A549 (cell line): ENCODE measurements at regions of chr12 and their contacts with region 1.

Region 1: DNA sequence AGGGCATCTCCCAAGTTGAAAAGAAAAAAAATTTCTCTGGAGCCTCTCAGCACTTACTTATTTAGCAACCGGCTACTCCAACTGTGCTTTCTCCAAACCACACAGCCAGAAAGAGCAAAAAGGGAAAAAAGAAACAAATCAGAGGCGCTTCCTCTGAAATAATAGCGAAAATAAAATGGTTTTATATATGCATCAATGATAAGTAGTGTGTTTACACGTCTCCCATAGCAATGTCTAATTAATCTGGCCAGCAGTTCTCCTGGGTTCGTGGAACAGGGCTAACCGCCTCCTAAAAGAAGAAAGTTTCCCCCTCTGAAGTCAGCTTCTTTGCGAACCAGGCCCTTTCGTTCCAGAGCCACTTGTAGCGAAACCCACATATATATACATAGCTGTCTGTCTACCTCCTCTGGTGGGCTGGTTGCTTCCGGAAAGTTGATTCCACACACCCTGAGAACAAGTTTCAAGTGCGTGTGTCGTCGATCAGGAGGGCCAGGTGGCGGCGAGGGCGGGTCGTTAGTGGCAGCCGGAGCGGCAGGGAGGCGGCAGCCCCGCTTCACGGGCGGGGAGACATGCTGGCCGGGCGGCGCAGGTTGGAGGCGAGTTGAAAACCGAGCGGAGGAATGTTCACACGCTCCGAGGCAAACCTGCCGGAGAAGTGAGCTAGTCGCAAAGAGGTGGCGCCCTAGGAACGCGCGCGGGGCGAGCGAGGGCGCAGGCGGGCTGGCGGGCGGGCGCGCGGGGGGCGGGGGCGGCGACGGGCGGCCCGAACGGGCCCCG is 2.7 kb downstream of the PTHLH start:
- DNase-seq: peak; percentile 47 to 90
- ATAC-seq: peak; percentile 79 to 80
- H3K4me3 ChIP-seq: peak overlapping the region; percentile 64
- H3K27ac ChIP-seq: peak overlapping the region; percentile 82 to 95
- H3K4me1 ChIP-seq: peaks cover 83% of the 10 kb centered on the region
- CTCF ChIP-seq: peak; percentile 65
- EP300 ChIP-seq: no peak
- POLR2A ChIP-seq: peak; percentile 41
- RAD21 ChIP-seq: peak; percentile 73 to 75

Region 2: GRCh38 chr12:27779920-27780611 is 189.7 kb before region 1 on chr12 and contains the starts of genes KLHL42 and MANSC4:
- CTCF ChIA-PET with region 1: no interaction called
- POLR2A ChIA-PET with region 1: interaction called, 10 read pairs
- DNase-seq: peak; percentile 43 to 75
- ATAC-seq: peak; percentile 87 to 90
- H3K4me3 ChIP-seq: peak within 1 kb of the TSS; percentile 66
- H3K27ac ChIP-seq: peak within 1 kb of the TSS; percentile 92 to 97
- H3K4me1 ChIP-seq: peaks cover 25% of the 10 kb centered on the region
- CTCF ChIP-seq: 0 out of 3 replicates have a peak, but pooled peaks have one; percentile 7
- EP300 ChIP-seq: no peak
- POLR2A ChIP-seq: peak; percentile 55
- RAD21 ChIP-seq: no peak
- polyA plus RNA-seq, gene KLHL42: 24.0 and 29.1 TPM in 2 replicates
- polyA plus RNA-seq, gene MANSC4: 0.09 and 0.21 TPM in 2 replicates

Region 3: DNA sequence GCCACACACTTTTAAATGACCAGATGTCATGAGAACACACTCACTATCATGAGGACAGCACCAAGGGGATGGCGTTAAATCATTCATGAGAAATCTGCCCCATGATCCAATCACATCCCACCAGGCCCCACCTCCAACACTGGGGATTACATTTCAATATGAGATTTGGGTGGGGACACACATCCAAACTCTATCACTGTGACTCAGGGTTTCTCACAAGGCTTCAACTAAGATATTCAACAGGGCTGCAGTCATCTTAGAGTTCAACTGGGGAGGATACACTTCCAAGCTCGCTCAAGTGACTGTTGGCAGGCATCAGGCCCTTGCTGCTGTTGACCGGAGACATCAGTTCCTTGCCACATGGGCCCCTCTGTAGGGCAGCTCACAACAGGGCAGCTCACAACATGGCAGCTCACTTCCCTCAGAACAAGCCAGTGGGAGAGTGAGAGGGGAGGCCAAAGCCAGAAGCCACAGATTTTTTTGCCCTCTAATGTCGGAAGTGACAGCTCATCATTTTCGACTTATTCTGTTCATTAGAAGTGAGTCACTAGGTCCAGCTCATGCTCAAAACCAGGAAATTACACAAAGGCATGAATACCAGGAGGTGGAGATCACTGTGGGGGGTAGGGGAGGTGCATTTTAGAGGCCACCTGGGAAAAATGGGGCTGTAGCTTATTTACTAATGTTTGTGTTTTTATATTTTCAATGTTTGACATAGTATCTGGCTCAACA is 53.5 kb after region 1 on chr12:
- CTCF ChIA-PET with region 1: interaction called, 13 read pairs
- POLR2A ChIA-PET with region 1: interaction called, 6 read pairs
- DNase-seq: peak in 1 of 2 experiments; percentile 87
- ATAC-seq: peak; percentile 76 to 87
- H3K4me3 ChIP-seq: no peak overlapping the region
- H3K27ac ChIP-seq: peak overlapping the region; percentile 80 to 90
- H3K4me1 ChIP-seq: peaks cover 64% of the 10 kb centered on the region
- CTCF ChIP-seq: no peak
- EP300 ChIP-seq: peak; percentile 68 to 74; a peak in 2 of 5 replicates
- POLR2A ChIP-seq: no peak
- RAD21 ChIP-seq: peak; percentile 22 to 41; a peak in 3 of 5 replicates

Region 4: GRCh38 chr12:28164644-28165275 is 194.9 kb after region 1 on chr12:
- CTCF ChIA-PET with region 1: interaction called, 15 read pairs
- POLR2A ChIA-PET with region 1: interaction called, 4 read pairs
- DNase-seq: peak in 1 of 2 experiments; percentile 62
- ATAC-seq: peak; percentile 62 to 86; a peak in 5 of 6 replicates
- H3K4me3 ChIP-seq: no peak overlapping the region
- H3K27ac ChIP-seq: peak overlapping the region; percentile 49 to 53; a peak in 5 of 6 replicates
- H3K4me1 ChIP-seq: peaks cover 14% of the 10 kb centered on the region
- CTCF ChIP-seq: no peak
- EP300 ChIP-seq: no peak
- POLR2A ChIP-seq: no peak
- RAD21 ChIP-seq: no peak

Region 5: DNA sequence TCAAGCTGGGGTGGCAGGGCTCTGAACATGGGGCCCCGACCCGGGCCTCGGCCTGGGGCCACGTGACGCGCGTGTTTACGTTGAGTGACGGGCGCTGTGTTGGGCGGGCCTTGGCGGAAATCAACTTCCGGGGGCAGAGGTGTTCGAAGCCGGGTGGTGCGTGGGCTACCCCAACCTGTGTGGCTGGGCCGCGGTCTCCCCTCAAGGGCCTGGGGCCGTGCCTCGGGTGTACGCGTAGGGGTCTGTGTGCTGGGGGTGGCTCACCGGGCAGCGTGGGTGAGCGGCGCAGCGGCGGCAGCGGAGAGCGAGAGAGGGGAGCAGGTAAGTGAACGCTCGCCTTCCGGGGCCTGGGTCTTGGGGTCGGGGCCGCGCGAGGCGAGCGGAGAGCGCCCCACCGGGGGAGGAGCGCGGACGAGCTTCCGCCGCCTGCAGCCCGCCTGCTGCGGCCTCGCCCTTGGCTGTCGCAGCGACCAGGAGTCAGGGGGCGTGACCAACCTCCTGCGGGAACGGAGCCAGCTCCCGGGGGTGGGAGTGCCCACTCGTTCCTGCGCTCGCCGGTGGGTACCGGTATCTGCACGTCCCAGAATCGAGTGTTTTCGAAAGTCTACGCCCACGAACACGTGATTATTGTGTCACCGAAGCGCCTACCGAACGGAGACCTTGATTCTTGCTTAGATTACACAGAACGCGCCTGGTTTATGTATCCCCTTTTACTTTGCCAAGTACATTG is 220.7 kb after region 1 on chr12 and contains the start of gene CCDC91:
- CTCF ChIA-PET with region 1: interaction called, 7 read pairs
- POLR2A ChIA-PET with region 1: interaction called, 48 read pairs
- DNase-seq: peak; percentile 69 to 92
- ATAC-seq: peak; percentile 94 to 95
- H3K4me3 ChIP-seq: peak within 1 kb of the TSS; percentile 91
- H3K27ac ChIP-seq: peak within 1 kb of the TSS; percentile 98 to 99
- H3K4me1 ChIP-seq: peaks cover 9% of the 10 kb centered on the region
- CTCF ChIP-seq: no peak
- EP300 ChIP-seq: no peak
- POLR2A ChIP-seq: peak; percentile 55
- RAD21 ChIP-seq: peak in 1 of 2 experiments; percentile 29; a peak in 2 of 5 replicates
- polyA plus RNA-seq, gene CCDC91: 38.1 and 48.1 TPM in 2 replicates